ENCODE measurements at regions of chr6 and their contacts with region 1.

Region 1: GRCh38 chr6:30616811-30617564 is at the start of gene PPP1R10:
- DNase-seq: peak; percentile 99
- H3K4me3 ChIP-seq: peak within 1 kb of the TSS; percentile 63 to 76 (median 70)
- H3K27ac ChIP-seq: peak within 1 kb of the TSS; percentile 94 to 98 (median 96)
- H3K4me1 ChIP-seq: peaks cover 14 to 43% (median 36%) of the 10 kb centered on the region in 4 donors
- H3K27me3 ChIP-seq: no peaks in the 10 kb centered on the region
- CTCF ChIP-seq: no peak
- EP300 ChIP-seq: no peak
- POLR2A ChIP-seq: peak; percentile 100
- total RNA-seq, gene PPP1R10: 35.5 to 62.5 (median 53.8) TPM

Region 2: GRCh38 chr6:30686908-30687658 is 70.1 kb after region 1 on chr6:
- in situ Hi-C with region 1: no loop called
- intact Hi-C with region 1: loop called (anchors 5 kb)
- DNase-seq: peak; percentile 90
- H3K4me3 ChIP-seq: peak overlapping the region; percentile 63 to 81 (median 68)
- H3K27ac ChIP-seq: peak overlapping the region; percentile 93 to 99 (median 96)
- H3K4me1 ChIP-seq: peaks cover 6 to 80% (median 34%) of the 10 kb centered on the region in 4 donors
- H3K27me3 ChIP-seq: no peaks in the 10 kb centered on the region
- CTCF ChIP-seq: no peak
- EP300 ChIP-seq: peak; percentile 60
- POLR2A ChIP-seq: no peak

Measured in transverse colon (tissue), 4 donors.